CD8-positive, alpha-beta T cell (primary cell): ENCODE measurements at regions of chr4 and their contacts with region 1.

Region 1: GRCh38 chr4:146175541-146176453 is at the start of gene LSM6:
- DNase-seq: peak; percentile 60 to 92 (median 79)
- ATAC-seq: peak; percentile 90
- H3K4me3 ChIP-seq: peak within 1 kb of the TSS; percentile 88 to 97
- H3K4me3 Mint-ChIP-seq: peak within 1 kb of the TSS; percentile 91
- H3K27ac ChIP-seq: peak within 1 kb of the TSS; percentile 69 to 83
- H3K27ac Mint-ChIP-seq: peak within 1 kb of the TSS; percentile 95
- H3K4me1 ChIP-seq: peaks cover 48% of the 10 kb centered on the region
- H3K4me1 Mint-ChIP-seq: peaks cover 59% of the 10 kb centered on the region
- H3K27me3 ChIP-seq: no peaks in the 10 kb centered on the region
- H3K27me3 Mint-ChIP-seq: no peaks in the 10 kb centered on the region
- CTCF ChIP-seq: no peak
- total RNA-seq, gene LSM6: 17.6 to 20.6 TPM

Region 2: DNA sequence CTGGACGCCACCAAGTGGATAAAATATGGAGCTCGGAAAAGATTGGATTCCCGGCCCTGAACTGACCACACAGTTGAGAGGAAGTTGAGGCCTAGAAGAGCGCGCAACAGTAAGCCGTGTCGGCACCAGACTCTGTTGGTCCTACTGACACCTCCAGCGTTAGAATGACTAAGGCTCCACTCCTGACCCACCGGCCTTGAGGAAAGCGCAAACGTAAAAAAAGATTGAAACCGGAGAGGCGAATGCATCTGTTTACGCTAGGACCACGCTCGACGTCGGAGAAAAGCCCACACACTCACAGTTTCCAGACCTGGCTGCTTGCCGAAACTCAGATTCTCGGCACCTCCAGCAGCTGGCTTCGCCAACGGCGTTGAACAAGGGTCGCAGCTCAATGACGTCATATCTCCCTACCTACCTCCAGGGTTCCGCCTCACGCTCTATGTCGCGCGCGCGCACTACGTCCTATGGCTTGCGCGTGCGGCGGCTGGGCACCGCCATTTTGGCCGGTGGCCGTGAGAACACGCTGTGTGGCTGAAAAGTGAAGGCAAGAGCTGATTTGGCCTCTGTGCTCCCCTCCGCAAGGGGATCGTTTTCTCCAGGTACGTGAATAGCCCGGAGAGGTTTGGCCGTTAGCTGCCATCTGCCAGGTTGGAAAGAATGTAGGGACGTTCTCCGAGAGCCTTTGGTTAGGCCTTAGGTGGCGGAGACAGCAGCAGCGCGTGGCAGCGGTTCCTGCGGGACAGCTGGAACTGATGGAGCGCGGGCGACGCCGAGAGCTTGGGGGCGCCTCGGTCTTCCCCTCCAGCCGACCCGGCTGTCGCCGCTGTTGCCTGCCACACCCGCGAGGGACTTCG is 1077.7 kb before region 1 on chr4 and contains the starts of genes ABCE1 and ANAPC10:
- CTCF ChIA-PET with region 1: no interaction called
- POLR2A ChIA-PET with region 1: no interaction called
- intact Hi-C with region 1: loop called (anchors 2 to 10 kb)
- DNase-seq: peak; percentile 84 to 99 (median 97)
- ATAC-seq: peak; percentile 89
- H3K4me3 ChIP-seq: peak within 1 kb of the TSS; percentile 70 to 81
- H3K4me3 Mint-ChIP-seq: peak within 1 kb of the TSS; percentile 95
- H3K27ac ChIP-seq: peak within 1 kb of the TSS; percentile 88 to 91
- H3K27ac Mint-ChIP-seq: peak within 1 kb of the TSS; percentile 98
- H3K4me1 ChIP-seq: peaks cover 41% of the 10 kb centered on the region
- H3K4me1 Mint-ChIP-seq: peaks cover 46% of the 10 kb centered on the region
- H3K27me3 ChIP-seq: no peaks in the 10 kb centered on the region
- H3K27me3 Mint-ChIP-seq: no peaks in the 10 kb centered on the region
- CTCF ChIP-seq: no peak
- total RNA-seq, gene ABCE1: 68.8 to 70.9 TPM
- total RNA-seq, gene ANAPC10: 24.5 to 26.7 TPM

Region 3: DNA sequence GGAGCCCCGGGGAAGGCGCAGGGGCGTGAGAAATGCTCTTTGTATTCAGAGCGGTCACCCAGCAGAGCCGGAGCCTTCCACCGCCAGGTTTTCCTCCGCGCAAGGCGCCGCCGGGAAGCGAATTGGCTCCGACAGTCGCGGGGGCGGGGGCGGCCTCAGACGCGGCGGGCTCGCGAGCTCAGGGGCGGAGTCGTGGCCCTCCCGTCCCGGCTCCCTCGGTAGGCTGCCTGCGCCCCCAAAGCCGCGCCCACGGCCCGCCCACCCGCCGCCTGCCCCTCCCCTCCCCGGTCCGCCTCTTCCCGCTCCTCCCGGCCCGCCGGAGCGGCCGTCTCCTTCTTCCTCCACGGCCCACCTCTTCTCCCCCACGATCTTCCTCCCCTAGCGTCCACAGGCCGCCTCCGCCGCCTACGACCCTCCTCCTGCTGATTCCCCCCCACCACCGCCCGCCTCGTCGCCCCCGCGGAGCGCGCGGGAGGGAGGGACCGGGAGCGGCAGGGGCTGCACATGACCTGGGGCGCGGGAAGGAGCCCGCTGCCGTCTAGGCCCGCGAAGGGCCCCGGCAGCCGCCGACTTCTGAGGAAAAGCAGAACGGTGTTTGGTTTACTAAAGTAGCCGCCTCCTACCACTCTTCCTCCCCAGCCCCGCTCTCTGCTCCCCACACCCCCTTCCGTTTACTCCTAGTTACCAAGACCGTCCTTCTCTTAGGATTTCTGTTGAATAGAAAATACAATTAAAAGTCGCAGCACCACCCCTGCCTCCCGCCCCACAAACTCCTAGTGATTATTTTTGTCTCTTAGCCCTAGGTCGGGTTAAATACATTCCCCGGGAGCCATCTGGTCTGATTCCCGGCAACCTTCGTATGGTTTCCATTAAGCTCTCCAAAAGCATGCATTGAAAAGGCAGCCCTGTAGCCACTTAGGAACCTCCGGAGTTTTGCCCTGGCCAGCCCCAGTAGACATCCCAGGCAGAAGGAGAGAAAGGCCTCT is 442.6 kb before region 1 on chr4:
- CTCF ChIA-PET with region 1: no interaction called
- POLR2A ChIA-PET with region 1: no interaction called
- intact Hi-C with region 1: loop called (anchors 2 to 10 kb)
- DNase-seq: peak; percentile 58 to 92 (median 83)
- ATAC-seq: peak; percentile 98
- H3K4me3 ChIP-seq: peak overlapping the region; percentile 71 to 73
- H3K4me3 Mint-ChIP-seq: peak overlapping the region; percentile 80
- H3K27ac ChIP-seq: peak overlapping the region in 1 of 2 experiments; percentile 45
- H3K27ac Mint-ChIP-seq: peak overlapping the region; percentile 29
- H3K4me1 ChIP-seq: peaks cover 3% of the 10 kb centered on the region
- H3K4me1 Mint-ChIP-seq: peaks cover 9% of the 10 kb centered on the region
- H3K27me3 ChIP-seq: no peaks in the 10 kb centered on the region
- H3K27me3 Mint-ChIP-seq: peaks cover 4% of the 10 kb centered on the region
- CTCF ChIP-seq: no peak

Region 4: GRCh38 chr4:146191766-146192458 is 16.1 kb after region 1 on chr4:
- CTCF ChIA-PET with region 1: no interaction called
- POLR2A ChIA-PET with region 1: no interaction called
- intact Hi-C with region 1: no loop called
- DNase-seq: no peak
- ATAC-seq: no peak
- H3K4me3 ChIP-seq: no peak overlapping the region
- H3K4me3 Mint-ChIP-seq: no peak overlapping the region
- H3K27ac ChIP-seq: no peak overlapping the region
- H3K27ac Mint-ChIP-seq: no peak overlapping the region
- H3K4me1 ChIP-seq: no peaks in the 10 kb centered on the region
- H3K4me1 Mint-ChIP-seq: no peaks in the 10 kb centered on the region
- H3K27me3 ChIP-seq: no peaks in the 10 kb centered on the region
- H3K27me3 Mint-ChIP-seq: no peaks in the 10 kb centered on the region
- CTCF ChIP-seq: no peak

Region 5: DNA sequence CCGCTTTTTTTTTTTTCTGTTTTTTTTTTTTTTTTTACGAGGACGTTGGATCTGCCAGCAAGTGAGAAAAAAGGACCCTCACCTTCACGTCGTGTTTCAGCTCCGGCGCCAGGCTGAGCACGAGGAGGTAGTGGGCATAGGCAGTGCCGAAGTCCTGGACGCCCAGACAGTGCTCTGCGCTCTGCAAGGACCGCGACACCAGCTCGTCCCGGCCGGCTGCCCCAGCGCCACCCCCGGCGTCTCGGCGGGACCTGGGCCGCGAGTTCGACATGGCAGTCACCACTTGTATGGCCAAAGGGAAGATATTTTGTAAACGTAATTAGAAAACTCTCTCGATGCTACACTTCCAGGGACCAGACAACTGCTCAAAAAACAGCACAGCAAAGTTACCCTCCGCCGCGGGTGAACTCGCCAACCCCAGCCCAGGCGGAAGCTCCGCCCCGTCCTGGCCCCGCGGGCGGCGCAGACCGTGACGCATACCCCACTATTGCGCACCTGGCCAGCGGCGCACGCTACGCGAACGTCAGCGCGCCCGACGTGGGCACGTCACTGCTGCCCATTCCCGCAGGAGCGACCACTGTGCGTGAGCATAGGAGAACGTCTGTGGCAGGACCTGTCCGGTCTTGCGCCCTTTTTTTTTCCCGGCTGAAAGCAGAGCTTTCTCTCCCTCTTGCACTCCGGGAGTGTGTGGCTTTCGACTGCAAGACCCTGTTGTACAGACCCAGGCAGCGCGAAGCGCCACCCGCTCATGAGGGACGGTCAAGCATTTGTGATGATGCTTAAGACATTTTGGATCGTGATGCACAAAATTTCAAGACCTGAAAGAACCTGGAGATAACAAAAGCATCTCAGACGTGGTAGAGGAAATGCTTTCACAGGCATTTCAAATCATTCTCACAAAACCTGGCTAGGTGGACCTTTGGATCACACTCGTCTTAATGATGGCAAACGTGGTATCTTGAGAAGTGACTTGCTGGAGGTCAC is 1508.2 kb after region 1 on chr4 and contains the start of gene PRMT9:
- CTCF ChIA-PET with region 1: no interaction called
- POLR2A ChIA-PET with region 1: no interaction called
- intact Hi-C with region 1: loop called in 1 of 2 experiments (anchors 5 kb)
- DNase-seq: peak; percentile 74 to 94 (median 88)
- ATAC-seq: peak; percentile 97
- H3K4me3 ChIP-seq: peak within 1 kb of the TSS; percentile 68 to 98
- H3K4me3 Mint-ChIP-seq: peak within 1 kb of the TSS; percentile 98
- H3K27ac ChIP-seq: peak within 1 kb of the TSS; percentile 92 to 98
- H3K27ac Mint-ChIP-seq: peak within 1 kb of the TSS; percentile 99
- H3K4me1 ChIP-seq: peaks cover 11% of the 10 kb centered on the region
- H3K4me1 Mint-ChIP-seq: peaks cover 40% of the 10 kb centered on the region
- H3K27me3 ChIP-seq: no peaks in the 10 kb centered on the region
- H3K27me3 Mint-ChIP-seq: peaks cover 8% of the 10 kb centered on the region
- CTCF ChIP-seq: no peak
- total RNA-seq, gene PRMT9: 36.4 to 40.3 TPM